GM12878 (cell line): ENCODE measurements at regions of chrX and their contacts with region 1.

Region 1: GRCh38 chrX:101617211-101618191 is at the start of gene ARMCX6:
- DNase-seq: no peak
- ATAC-seq: peak; percentile 94
- H3K4me3 ChIP-seq: peak within 1 kb of the TSS; percentile 85
- H3K27ac ChIP-seq: peak within 1 kb of the TSS; percentile 77
- H3K4me1 ChIP-seq: peaks cover 5% of the 10 kb centered on the region
- H3K27me3 ChIP-seq: no peaks in the 10 kb centered on the region
- CTCF ChIP-seq: peak; percentile 28 to 51 (median 42); a peak in 4 of 6 replicates
- EP300 ChIP-seq: no peak
- POLR2A ChIP-seq: peak; percentile 68
- RAD21 ChIP-seq: peak; percentile 41; the same call in 1 of the 2 replicates
- polyA plus RNA-seq, gene ARMCX6: 60.3 to 72.3 TPM

Region 2: GRCh38 chrX:101564651-101565165 is 52.8 kb before region 1 on chrX:
- CTCF ChIA-PET with region 1: no interaction called
- POLR2A ChIA-PET with region 1: no interaction called
- RAD21 ChIA-PET with region 1: no interaction called
- SMC1A ChIA-PET with region 1: no interaction called
- in situ Hi-C with region 1: no loop called
- intact Hi-C with region 1: no loop called
- DNase-seq: no peak
- ATAC-seq: no peak
- H3K4me3 ChIP-seq: no peak overlapping the region
- H3K27ac ChIP-seq: no peak overlapping the region
- H3K4me1 ChIP-seq: no peaks in the 10 kb centered on the region
- H3K27me3 ChIP-seq: no peaks in the 10 kb centered on the region
- CTCF ChIP-seq: no peak
- EP300 ChIP-seq: no peak
- POLR2A ChIP-seq: no peak
- RAD21 ChIP-seq: no peak

Region 3: DNA sequence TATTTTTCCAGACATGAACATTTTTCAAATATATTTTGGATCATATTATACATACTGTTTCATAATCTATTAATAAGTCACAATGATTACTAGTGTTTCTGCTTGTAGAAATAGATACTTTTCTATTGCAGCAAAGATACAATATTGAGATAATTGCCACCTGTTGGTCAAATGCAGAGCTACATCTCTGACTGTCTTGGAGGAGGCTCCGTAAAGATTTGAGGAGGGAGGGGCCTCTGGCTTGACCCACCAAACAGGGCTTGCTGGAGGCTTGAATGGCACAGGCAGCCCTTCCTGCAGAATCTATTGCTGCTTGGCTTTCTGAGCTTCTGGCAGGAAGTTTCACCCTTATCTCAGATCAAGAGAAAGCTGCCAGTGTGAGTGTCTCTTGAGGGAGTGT is 141.5 kb after region 1 on chrX:
- CTCF ChIA-PET with region 1: interaction called, 8 read pairs
- POLR2A ChIA-PET with region 1: no interaction called
- RAD21 ChIA-PET with region 1: no interaction called
- SMC1A ChIA-PET with region 1: interaction called, 3 read pairs
- in situ Hi-C with region 1: no loop called
- intact Hi-C with region 1: loop called (anchors 5 kb)
- DNase-seq: no peak
- ATAC-seq: peak; percentile 90
- H3K4me3 ChIP-seq: no peak overlapping the region
- H3K27ac ChIP-seq: no peak overlapping the region
- H3K4me1 ChIP-seq: no peaks in the 10 kb centered on the region
- H3K27me3 ChIP-seq: no peaks in the 10 kb centered on the region
- CTCF ChIP-seq: peak; percentile 30 to 49 (median 31); a peak in 5 of 6 replicates
- EP300 ChIP-seq: no peak
- POLR2A ChIP-seq: no peak
- RAD21 ChIP-seq: peak; percentile 41

Region 4: GRCh38 chrX:101774340-101774739 is 156.8 kb after region 1 on chrX:
- CTCF ChIA-PET with region 1: no interaction called
- POLR2A ChIA-PET with region 1: no interaction called
- RAD21 ChIA-PET with region 1: no interaction called
- SMC1A ChIA-PET with region 1: no interaction called
- in situ Hi-C with region 1: no loop called
- intact Hi-C with region 1: no loop called
- DNase-seq: peak; percentile 17
- ATAC-seq: peak; percentile 95
- H3K4me3 ChIP-seq: no peak overlapping the region
- H3K27ac ChIP-seq: no peak overlapping the region
- H3K4me1 ChIP-seq: no peaks in the 10 kb centered on the region
- H3K27me3 ChIP-seq: no peaks in the 10 kb centered on the region
- CTCF ChIP-seq: no peak
- EP300 ChIP-seq: no peak
- POLR2A ChIP-seq: no peak
- RAD21 ChIP-seq: no peak

Region 5: DNA sequence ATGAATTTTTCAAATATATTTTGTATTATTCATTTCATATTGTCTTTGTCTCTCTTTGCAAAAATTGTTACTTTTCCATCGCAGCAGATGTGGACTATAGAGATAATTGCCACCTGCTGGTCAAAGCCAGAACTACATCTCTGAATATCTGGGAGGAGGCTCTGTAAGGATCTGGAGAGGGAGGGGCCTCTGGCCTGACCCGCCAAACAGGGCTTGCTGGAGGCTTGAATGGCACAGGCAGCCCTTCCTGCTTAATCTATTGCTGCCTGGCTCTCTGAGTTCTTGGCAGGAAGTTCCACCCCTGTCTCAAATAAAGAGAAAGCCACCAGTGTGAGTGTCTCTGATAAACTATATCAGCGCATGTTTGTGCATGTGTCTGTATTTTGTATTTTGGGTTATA is 181.9 kb after region 1 on chrX:
- CTCF ChIA-PET with region 1: interaction called, 3 read pairs
- POLR2A ChIA-PET with region 1: no interaction called
- RAD21 ChIA-PET with region 1: interaction called, 3 read pairs
- SMC1A ChIA-PET with region 1: no interaction called
- in situ Hi-C with region 1: no loop called
- intact Hi-C with region 1: loop called (anchors 5 kb)
- DNase-seq: peak; percentile 62
- ATAC-seq: peak; percentile 100
- H3K4me3 ChIP-seq: no peak overlapping the region
- H3K27ac ChIP-seq: no peak overlapping the region
- H3K4me1 ChIP-seq: no peaks in the 10 kb centered on the region
- H3K27me3 ChIP-seq: no peaks in the 10 kb centered on the region
- CTCF ChIP-seq: peak; percentile 53 to 63 (median 60); a peak in 5 of 6 replicates
- EP300 ChIP-seq: no peak
- POLR2A ChIP-seq: no peak
- RAD21 ChIP-seq: peak; percentile 58